ENCODE measurements at regions of chr22 and their contacts with region 1.

Region 1: DNA sequence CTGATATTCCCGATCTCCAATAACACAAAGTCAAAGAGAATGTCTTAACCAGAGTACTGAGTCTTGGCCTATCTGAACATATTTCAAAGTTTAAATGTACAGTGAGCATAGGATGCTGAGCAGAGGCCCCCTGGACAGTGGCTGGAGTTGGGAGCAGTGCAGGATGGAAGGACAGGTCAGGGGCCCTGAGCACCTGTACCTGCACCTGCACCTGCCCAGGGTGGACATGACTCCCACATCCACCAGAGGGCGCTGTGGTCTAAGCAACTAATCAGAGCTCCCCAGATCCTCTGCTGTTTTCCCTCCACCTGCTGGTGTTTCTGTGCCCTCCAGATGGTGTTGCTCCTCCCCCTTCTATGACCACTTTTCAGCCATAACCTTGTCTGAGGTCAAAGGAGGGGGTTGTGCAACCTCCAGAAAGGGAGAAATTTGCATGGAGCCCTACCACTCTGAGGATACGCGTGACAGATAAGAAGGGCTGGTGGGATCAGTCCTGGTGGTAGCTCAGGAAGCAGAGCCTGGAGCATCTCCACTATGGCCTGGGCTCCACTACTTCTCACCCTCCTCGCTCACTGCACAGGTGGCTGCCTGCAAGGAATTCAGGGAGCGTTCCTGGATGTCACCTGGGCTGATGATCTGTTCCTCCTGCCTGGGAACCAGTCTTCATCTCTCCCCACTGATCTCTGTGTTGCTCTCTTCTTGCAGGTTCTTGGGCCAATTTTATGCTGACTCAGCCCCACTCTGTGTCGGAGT is 49.1 kb upstream of the VPREB1 start:
- DNase-seq: peak; percentile 92
- ATAC-seq: peak; percentile 75
- H3K4me3 ChIP-seq: peak overlapping the region in 4 of 5 experiments; percentile 3 to 38 (median 28)
- H3K4me3 Mint-ChIP-seq: peak overlapping the region; percentile 82
- H3K27ac ChIP-seq: peak overlapping the region; percentile 54 to 75
- H3K27ac Mint-ChIP-seq: peak overlapping the region; percentile 91
- H3K4me1 ChIP-seq: peaks cover 41 to 46% of the 10 kb centered on the region in 2 donors
- H3K4me1 Mint-ChIP-seq: peaks cover 62% of the 10 kb centered on the region
- H3K27me3 ChIP-seq: no peaks in the 10 kb centered on the region
- H3K27me3 Mint-ChIP-seq: no peaks in the 10 kb centered on the region
- CTCF ChIP-seq: peak; percentile 93

Region 2: GRCh38 chr22:21902296-21903087 is 292.9 kb before region 1 on chr22:
- CTCF ChIA-PET with region 1: no interaction called
- POLR2A ChIA-PET with region 1: no interaction called
- intact Hi-C with region 1: no loop called
- DNase-seq: no peak
- ATAC-seq: no peak
- H3K4me3 ChIP-seq: no peak overlapping the region
- H3K4me3 Mint-ChIP-seq: no peak overlapping the region
- H3K27ac ChIP-seq: no peak overlapping the region
- H3K27ac Mint-ChIP-seq: no peak overlapping the region
- H3K4me1 ChIP-seq: no peaks in the 10 kb centered on the region
- H3K4me1 Mint-ChIP-seq: no peaks in the 10 kb centered on the region
- H3K27me3 ChIP-seq: no peaks in the 10 kb centered on the region
- H3K27me3 Mint-ChIP-seq: no peaks in the 10 kb centered on the region
- CTCF ChIP-seq: no peak

Region 3: GRCh38 chr22:22118987-22119386 is 76.5 kb before region 1 on chr22:
- CTCF ChIA-PET with region 1: interaction called, 11 read pairs
- POLR2A ChIA-PET with region 1: no interaction called
- intact Hi-C with region 1: no loop called
- DNase-seq: no peak
- ATAC-seq: no peak
- H3K4me3 ChIP-seq: peak overlapping the region in 3 of 5 experiments; percentile 9 to 53 (median 16)
- H3K4me3 Mint-ChIP-seq: peak overlapping the region; percentile 61
- H3K27ac ChIP-seq: peak overlapping the region; percentile 69 to 80
- H3K27ac Mint-ChIP-seq: peak overlapping the region; percentile 93
- H3K4me1 ChIP-seq: peaks cover 4 to 13% of the 10 kb centered on the region in 2 donors
- H3K4me1 Mint-ChIP-seq: peaks cover 22% of the 10 kb centered on the region
- H3K27me3 ChIP-seq: no peaks in the 10 kb centered on the region
- H3K27me3 Mint-ChIP-seq: no peaks in the 10 kb centered on the region
- CTCF ChIP-seq: no peak

Region 4: DNA sequence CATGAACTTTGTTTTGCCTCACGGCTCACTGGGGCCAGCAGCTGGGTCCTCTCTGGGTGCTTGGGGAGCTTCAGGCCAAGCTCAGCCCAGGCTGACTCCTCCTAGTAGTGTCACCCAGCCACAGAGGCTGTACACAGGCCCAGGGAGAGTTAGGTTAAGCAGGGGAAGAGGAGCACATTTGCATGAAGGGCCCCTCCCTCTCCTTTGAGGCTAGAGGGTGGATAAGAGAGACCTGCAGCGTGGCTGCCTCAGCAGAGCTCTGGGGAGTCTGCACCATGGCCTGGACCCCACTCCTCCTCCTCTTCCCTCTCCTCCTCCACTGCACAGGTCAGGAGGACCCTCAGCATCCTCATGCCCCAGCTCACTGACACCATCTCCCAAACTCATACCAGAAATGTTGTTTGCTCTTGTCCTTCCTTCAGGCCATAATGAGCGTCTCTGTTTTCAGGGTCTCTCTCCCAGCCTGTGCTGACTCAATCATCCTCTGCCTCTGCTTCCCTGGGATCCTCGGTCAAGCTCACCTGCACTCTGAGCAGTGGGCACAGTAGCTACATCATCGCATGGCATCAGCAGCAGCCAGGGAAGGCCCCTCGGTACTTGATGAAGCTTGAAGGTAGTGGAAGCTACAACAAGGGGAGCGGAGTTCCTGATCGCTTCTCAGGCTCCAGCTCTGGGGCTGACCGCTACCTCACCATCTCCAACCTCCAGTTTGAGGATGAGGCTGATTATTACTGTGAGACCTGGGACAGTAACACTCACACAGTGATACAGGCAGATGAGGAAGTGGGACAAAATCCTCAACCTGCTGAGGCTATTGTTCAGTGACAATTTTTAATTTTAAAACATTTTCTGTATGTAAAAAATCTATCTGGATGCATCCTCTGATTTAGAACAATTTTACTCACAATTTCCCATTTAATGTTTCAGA is 33.3 kb before region 1 on chr22:
- CTCF ChIA-PET with region 1: interaction called, 166 read pairs
- POLR2A ChIA-PET with region 1: interaction called, 38 read pairs
- intact Hi-C with region 1: loop called (anchors 1 kb)
- DNase-seq: peak; percentile 80
- ATAC-seq: peak; percentile 95
- H3K4me3 ChIP-seq: peak overlapping the region in 4 of 5 experiments; percentile 14 to 70 (median 38)
- H3K4me3 Mint-ChIP-seq: peak overlapping the region; percentile 89
- H3K27ac ChIP-seq: peak overlapping the region; percentile 96 to 98
- H3K27ac Mint-ChIP-seq: peak overlapping the region; percentile 98
- H3K4me1 ChIP-seq: peaks cover 75 to 82% of the 10 kb centered on the region in 2 donors
- H3K4me1 Mint-ChIP-seq: peaks cover 85% of the 10 kb centered on the region
- H3K27me3 ChIP-seq: no peaks in the 10 kb centered on the region
- H3K27me3 Mint-ChIP-seq: no peaks in the 10 kb centered on the region
- CTCF ChIP-seq: no peak

Region 5: DNA sequence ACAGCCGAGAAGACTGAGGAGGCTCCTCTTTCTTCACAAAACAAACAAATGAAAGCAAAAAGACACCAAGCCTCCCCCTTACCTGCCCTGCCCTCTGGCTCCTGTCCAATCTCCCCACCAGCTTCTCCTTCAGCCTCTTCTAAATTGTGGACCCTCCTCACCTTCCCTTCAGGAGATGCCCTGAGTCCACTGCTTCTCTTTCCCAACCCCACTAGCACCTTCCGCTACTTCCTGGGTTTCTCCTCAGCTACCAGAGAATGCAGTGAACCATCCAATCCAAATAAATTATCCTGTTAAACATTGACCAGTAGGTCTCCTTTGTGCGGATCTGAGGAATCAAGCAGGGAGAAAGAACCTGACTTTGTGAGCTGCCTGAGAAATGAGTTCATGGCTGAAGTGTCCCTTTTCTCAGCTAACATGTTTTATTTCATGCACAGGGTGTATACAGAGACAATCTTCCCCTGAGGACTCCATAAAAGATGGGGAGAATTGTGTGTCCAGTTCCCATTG is 14.0 kb before region 1 on chr22:
- CTCF ChIA-PET with region 1: interaction called, 71 read pairs
- POLR2A ChIA-PET with region 1: no interaction called
- intact Hi-C with region 1: no loop called
- DNase-seq: no peak
- ATAC-seq: no peak
- H3K4me3 ChIP-seq: no peak overlapping the region
- H3K4me3 Mint-ChIP-seq: no peak overlapping the region
- H3K27ac ChIP-seq: no peak overlapping the region
- H3K27ac Mint-ChIP-seq: no peak overlapping the region
- H3K4me1 ChIP-seq: peaks cover 18 to 27% of the 10 kb centered on the region in 2 donors
- H3K4me1 Mint-ChIP-seq: peaks cover 37% of the 10 kb centered on the region
- H3K27me3 ChIP-seq: no peaks in the 10 kb centered on the region
- H3K27me3 Mint-ChIP-seq: no peaks in the 10 kb centered on the region
- CTCF ChIP-seq: no peak

Region 6: DNA sequence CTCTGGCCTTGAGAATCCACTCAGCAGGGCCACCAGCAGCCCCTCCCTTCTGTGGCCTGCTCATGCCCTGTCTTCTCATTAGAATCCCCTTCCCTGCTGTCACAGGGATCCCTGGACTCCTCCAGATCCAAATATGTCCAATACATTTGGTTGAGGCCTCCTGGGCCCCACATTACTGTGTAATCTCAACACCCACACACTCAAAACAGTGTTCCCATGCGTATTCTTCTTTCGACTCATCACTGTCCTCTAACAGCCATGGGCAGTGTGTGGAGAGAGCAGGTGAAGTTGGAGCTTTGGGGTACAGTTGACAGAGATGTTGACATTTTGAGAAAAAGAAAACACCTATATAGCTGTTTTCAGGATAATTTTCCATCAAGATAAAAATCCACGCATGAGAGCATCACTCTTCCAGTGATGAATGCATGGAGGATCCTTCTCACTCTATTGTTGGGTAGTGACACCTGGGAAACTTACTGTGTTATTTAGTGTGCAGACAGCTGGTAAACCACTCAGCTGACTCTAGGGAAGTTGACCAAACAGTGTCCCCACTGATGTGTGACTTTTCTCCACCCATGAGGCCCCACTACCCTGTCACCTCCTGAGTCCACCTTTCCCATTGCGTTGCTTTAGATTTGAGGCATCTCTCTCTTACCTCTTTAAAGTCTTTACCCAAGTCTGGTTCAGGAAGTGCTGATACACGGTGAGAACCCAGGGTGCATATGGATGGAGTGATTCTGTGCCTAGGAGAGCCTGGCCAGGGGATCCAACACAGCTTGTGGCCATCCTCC is 20.4 kb after region 1 on chr22:
- CTCF ChIA-PET with region 1: interaction called, 111 read pairs
- POLR2A ChIA-PET with region 1: no interaction called
- intact Hi-C with region 1: no loop called
- DNase-seq: peak; percentile 57
- ATAC-seq: peak; percentile 69
- H3K4me3 ChIP-seq: peak overlapping the region in 1 of 5 experiments; percentile 6
- H3K4me3 Mint-ChIP-seq: peak overlapping the region; percentile 59
- H3K27ac ChIP-seq: peak overlapping the region; percentile 26 to 41
- H3K27ac Mint-ChIP-seq: peak overlapping the region; percentile 70
- H3K4me1 ChIP-seq: peaks cover 37 to 54% of the 10 kb centered on the region in 2 donors
- H3K4me1 Mint-ChIP-seq: peaks cover 58% of the 10 kb centered on the region
- H3K27me3 ChIP-seq: no peaks in the 10 kb centered on the region
- H3K27me3 Mint-ChIP-seq: no peaks in the 10 kb centered on the region
- CTCF ChIP-seq: no peak

Region 7: DNA sequence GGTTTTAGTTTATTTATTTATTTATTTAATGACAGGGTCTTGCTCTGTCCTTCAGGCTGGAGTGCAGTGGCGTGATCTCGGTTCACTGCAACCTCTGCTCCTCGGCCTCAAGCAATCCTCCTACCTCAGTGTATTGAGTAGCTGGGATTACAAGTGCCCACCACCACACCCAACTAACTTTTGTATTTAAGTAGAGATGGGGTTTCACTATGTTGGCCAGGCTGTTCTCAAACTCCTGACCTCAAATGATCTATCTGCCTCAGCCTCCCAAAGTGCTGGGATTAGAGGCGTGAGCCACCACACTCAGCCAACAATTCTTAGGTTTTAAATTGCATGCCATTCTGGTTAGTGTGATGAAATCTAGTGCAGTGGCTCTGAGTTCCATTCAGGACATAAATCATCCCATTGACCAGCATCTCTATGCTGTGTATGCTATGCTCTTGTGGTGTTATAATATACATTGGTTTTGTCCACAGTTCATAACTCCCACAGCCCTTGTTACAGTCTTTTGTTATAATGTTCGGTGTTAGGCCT is 284.6 kb after region 1 on chr22:
- CTCF ChIA-PET with region 1: no interaction called
- POLR2A ChIA-PET with region 1: no interaction called
- intact Hi-C with region 1: no loop called
- DNase-seq: no peak
- ATAC-seq: no peak
- H3K4me3 ChIP-seq: no peak overlapping the region
- H3K4me3 Mint-ChIP-seq: no peak overlapping the region
- H3K27ac ChIP-seq: no peak overlapping the region
- H3K27ac Mint-ChIP-seq: no peak overlapping the region
- H3K4me1 ChIP-seq: peaks cover 3 to 6% of the 10 kb centered on the region in 2 donors
- H3K4me1 Mint-ChIP-seq: peaks cover 3% of the 10 kb centered on the region
- H3K27me3 ChIP-seq: no peaks in the 10 kb centered on the region
- H3K27me3 Mint-ChIP-seq: no peaks in the 10 kb centered on the region
- CTCF ChIP-seq: no peak

Measured in B cell (primary cell).